ENCODE measurements at regions of chr1 and their contacts with region 1.

Region 1: GRCh38 chr1:92774407-92774806 is 10.5 kb downstream of the EVI5 start:
- DNase-seq: no peak
- ATAC-seq: no peak
- H3K4me3 ChIP-seq: no peak overlapping the region
- H3K27ac ChIP-seq: no peak overlapping the region
- H3K4me1 ChIP-seq: no peaks in the 10 kb centered on the region
- H3K27me3 ChIP-seq: no peaks in the 10 kb centered on the region
- CTCF ChIP-seq: no peak
- POLR2A ChIP-seq: no peak
- RAD21 ChIP-seq: no peak

Region 2: DNA sequence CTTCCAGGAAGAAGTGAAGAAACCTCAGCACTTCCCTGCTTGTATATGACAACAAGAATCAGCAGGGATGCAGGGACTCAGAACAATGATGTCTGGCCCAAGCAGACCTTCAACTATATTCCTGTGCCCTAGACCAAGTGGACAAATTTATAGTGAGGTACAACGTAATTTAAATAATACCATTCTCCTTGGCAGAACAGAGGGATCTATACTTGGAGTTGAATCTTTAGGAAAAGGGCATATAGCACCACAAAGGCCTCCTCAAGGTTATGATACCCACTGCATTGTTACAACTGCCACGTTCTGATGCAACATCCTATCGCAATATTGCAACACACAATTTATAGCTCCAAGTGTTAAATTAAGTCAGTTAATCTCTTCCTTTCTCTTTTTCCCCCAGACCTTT is 258.6 kb before region 1 on chr1:
- CTCF ChIA-PET with region 1: no interaction called
- POLR2A ChIA-PET with region 1: no interaction called
- dilution Hi-C with region 1: no loop called
- in situ Hi-C with region 1: no loop called
- intact Hi-C with region 1: no loop called
- DNase-seq: no peak
- ATAC-seq: no peak
- H3K4me3 ChIP-seq: no peak overlapping the region
- H3K27ac ChIP-seq: no peak overlapping the region
- H3K4me1 ChIP-seq: no peaks in the 10 kb centered on the region
- H3K27me3 ChIP-seq: no peaks in the 10 kb centered on the region
- CTCF ChIP-seq: no peak
- POLR2A ChIP-seq: no peak
- RAD21 ChIP-seq: no peak

Region 3: DNA sequence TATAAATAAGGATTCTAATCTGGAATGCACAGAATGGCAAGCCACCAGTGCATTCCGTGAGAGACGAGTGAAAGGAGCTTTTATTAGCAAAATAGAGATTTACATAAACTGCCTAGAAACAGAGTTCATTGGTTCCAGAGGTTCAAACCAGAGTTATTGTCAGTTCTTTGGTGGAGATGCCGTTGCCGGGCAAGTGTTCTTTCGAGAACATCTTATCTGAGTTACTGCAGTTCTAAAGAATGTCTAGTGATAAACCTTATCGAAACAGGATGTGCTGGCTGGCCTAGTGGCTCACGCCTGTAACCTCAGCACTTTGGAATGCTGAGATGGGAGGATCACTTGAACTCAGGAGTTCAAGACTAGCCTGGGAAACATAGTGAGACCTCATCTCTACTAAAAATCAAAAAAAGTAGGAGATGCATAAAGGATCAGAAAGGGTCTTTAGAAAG is 30.3 kb after region 1 on chr1:
- CTCF ChIA-PET with region 1: no interaction called
- POLR2A ChIA-PET with region 1: interaction called, 15 read pairs
- dilution Hi-C with region 1: no loop called
- in situ Hi-C with region 1: no loop called
- intact Hi-C with region 1: no loop called
- DNase-seq: peak; percentile 99
- ATAC-seq: peak; percentile 97
- H3K4me3 ChIP-seq: no peak overlapping the region
- H3K27ac ChIP-seq: peak overlapping the region; percentile 85
- H3K4me1 ChIP-seq: peaks cover 6% of the 10 kb centered on the region
- H3K27me3 ChIP-seq: no peaks in the 10 kb centered on the region
- CTCF ChIP-seq: no peak
- POLR2A ChIP-seq: no peak
- RAD21 ChIP-seq: no peak